OCI-LY7 (cell line): ENCODE measurements at regions of chr15 and their contacts with region 1.

Region 1: GRCh38 chr15:60585743-60586708 is 107.1 kb upstream of the ICE2 start:
- DNase-seq: peak; percentile 82
- H3K4me3 ChIP-seq: no peak overlapping the region
- H3K27ac ChIP-seq: no peak overlapping the region
- H3K4me1 ChIP-seq: peaks cover 5% of the 10 kb centered on the region
- CTCF ChIP-seq: peak; percentile 99

Region 2: GRCh38 chr15:60612400-60613048 is 26.5 kb after region 1 on chr15:
- CTCF ChIA-PET with region 1: no interaction called
- POLR2A ChIA-PET with region 1: no interaction called
- intact Hi-C with region 1: no loop called
- DNase-seq: no peak
- H3K4me3 ChIP-seq: no peak overlapping the region
- H3K27ac ChIP-seq: no peak overlapping the region
- H3K4me1 ChIP-seq: no peaks in the 10 kb centered on the region
- CTCF ChIP-seq: no peak

Region 3: DNA sequence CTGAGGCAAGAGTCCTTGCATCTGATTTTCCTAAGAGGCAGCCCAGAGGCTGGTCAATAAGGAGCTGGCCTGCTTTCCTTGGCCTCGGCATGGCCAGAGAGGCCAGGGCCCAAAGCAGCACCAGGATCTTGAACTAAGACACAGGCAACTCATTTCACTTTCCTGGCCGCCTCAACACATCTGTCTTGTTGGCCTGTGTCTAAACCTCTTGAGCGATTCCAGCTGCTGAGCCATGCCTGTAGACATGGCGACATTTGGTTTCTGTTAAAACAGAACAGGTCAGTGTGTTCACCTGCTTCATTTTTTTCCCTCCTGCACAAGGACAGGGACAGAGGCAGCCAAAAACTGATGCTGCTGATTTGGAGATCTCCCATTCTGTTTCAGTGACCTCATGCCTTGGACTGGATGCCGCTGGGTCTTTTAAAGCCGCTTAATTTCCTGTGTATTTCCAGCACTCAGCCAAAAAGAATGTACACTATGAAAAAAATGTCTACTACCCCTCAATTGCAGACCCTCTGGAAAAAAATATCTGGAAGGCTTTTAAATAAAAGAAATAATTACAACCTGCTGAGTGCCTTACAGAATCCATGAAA is 159.5 kb after region 1 on chr15:
- CTCF ChIA-PET with region 1: no interaction called
- POLR2A ChIA-PET with region 1: no interaction called
- intact Hi-C with region 1: loop called (anchors 10 kb)
- DNase-seq: no peak
- H3K4me3 ChIP-seq: no peak overlapping the region
- H3K27ac ChIP-seq: no peak overlapping the region
- H3K4me1 ChIP-seq: no peaks in the 10 kb centered on the region
- CTCF ChIP-seq: no peak

Region 4: DNA sequence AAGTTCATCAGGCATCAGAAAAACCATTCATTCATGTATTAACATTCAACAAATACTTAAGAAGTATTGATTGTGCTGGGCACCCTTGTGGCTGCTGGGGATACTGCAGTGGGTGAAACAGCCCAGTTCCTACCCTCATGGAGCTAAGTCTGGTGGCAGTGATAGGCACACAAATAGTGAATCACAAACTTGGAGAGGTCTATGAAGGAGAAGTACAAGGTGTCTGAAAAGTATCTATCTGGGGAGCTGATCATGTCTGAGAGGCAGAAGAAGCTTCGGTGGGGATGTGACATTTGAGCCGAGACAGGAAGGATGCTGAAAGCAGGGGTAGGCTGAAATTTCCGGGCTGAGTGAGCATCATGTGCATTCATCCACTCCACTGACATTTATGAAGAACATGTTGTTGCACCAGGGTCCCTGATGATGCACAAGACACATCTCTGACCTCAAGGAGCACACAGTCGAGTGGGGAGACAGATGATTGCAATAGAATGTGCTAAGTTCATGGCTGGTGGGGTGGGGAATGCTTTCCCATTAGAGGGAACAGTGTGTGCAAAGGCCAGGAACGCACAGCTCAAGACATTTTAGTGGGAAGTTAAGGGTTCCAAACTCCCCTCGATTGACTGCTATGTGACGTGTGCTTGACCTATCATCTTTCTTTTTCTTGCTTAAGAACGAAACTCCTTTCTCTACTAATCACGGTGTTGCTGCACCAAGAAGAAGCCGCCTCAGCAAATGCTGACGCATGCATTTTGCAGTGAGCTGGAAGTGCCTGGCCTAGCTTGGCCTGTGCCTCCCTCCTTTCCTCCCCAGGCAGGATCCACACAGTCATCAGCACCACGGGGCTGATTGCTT is 202.0 kb after region 1 on chr15:
- CTCF ChIA-PET with region 1: no interaction called
- POLR2A ChIA-PET with region 1: no interaction called
- intact Hi-C with region 1: loop called (anchors 5 kb)
- DNase-seq: peak; percentile 9
- H3K4me3 ChIP-seq: no peak overlapping the region
- H3K27ac ChIP-seq: no peak overlapping the region
- H3K4me1 ChIP-seq: no peaks in the 10 kb centered on the region
- CTCF ChIP-seq: peak; percentile 69

Region 5: DNA sequence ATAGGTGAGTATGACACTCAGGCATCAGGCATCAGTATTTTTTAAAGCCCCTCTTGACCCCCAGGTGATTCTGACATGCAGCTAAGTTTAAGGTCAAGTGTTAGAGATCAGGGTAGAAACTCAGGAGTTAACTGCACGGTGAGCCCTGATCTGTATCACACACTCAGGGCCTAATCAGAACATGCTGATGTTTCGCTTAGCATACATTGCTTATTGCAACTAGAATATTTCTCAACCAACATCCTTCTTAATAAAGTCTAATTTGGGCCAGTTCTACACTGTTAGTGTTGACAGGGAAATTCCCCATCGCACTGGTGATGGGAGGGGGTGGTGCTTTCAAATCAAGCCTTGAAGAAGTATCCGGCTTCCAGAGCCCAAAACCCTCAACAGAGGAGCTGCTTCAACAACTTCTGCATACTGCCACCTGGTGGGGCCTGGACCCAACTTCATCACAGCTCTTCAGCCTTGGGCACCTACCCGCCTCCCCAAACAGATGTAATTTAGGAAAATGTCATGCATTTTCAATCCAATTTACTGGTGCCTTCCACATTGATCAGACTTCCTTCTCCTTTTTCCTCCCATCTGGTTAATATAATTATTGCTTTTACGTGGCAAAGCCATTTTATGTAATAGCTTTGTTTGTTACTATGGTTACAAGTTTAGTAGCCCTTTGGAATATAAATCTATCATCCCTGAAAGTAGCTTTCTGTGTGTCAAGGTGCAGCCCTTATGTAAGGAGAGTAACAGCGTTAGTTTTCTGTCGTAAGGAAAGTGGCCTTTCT is 330.8 kb after region 1 on chr15:
- CTCF ChIA-PET with region 1: interaction called, 4 read pairs
- POLR2A ChIA-PET with region 1: interaction called, 4 read pairs
- intact Hi-C with region 1: loop called (anchors 1 kb)
- DNase-seq: peak; percentile 82
- H3K4me3 ChIP-seq: no peak overlapping the region
- H3K27ac ChIP-seq: no peak overlapping the region
- H3K4me1 ChIP-seq: peaks cover 7% of the 10 kb centered on the region
- CTCF ChIP-seq: peak; percentile 92

Region 6: GRCh38 chr15:61195116-61196002 is 609.3 kb after region 1 on chr15:
- CTCF ChIA-PET with region 1: no interaction called
- POLR2A ChIA-PET with region 1: no interaction called
- intact Hi-C with region 1: loop called (anchors 10 kb)
- DNase-seq: peak; percentile 58
- H3K4me3 ChIP-seq: no peak overlapping the region
- H3K27ac ChIP-seq: no peak overlapping the region
- H3K4me1 ChIP-seq: no peaks in the 10 kb centered on the region
- CTCF ChIP-seq: peak; percentile 80

Region 7: GRCh38 chr15:61834076-61834697 is 1248.2 kb after region 1 on chr15:
- CTCF ChIA-PET with region 1: no interaction called
- POLR2A ChIA-PET with region 1: no interaction called
- intact Hi-C with region 1: loop called (anchors 2 kb)
- DNase-seq: peak; percentile 71
- H3K4me3 ChIP-seq: no peak overlapping the region
- H3K27ac ChIP-seq: no peak overlapping the region
- H3K4me1 ChIP-seq: no peaks in the 10 kb centered on the region
- CTCF ChIP-seq: peak; percentile 96